CD14-positive monocyte (primary cell): ENCODE measurements at regions of chr6 and their contacts with region 1.

Region 1: DNA sequence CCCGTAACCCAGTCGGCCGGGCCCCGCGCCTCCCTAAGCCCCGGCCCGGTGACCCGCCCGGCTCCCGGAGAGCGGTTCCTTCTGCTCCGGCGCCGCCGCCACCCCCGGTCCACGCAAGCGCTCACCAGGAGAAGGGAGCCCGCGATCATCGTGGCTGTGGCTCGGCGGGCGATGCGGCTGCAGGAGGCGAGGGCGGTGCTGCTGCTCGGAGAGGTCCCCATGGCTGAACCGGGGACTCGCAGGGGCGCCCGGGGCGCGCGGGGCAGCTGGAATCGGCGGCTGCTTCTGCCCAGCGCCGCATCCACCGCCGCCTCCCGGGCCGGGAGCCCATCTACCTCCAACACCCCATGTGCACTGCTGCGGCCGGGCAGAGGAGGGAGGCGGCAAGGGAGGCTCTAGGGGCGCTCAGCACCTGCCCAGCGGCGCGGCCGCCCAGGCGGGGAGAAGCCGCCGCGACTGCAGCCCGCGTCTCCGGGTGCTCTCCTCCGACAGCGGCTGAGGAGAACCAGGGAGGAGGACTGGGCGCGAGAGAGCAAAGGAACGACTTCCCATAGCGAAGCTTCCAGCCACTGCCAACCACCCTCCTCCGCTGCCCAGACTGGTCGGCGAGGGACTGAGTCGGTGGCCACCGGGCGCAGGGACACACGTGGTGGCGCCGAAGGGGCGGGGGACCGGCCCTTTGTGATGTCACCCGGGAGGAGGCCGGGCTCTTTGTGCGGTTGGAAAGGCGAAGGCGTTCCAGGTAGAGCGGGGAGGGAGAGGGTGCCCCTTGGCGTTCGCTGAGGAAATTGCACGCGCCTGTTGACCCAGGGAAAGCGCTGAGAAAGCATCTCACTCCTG is at the start of gene TNFRSF21:
- DNase-seq: peak; percentile 84 to 93 (median 87)
- H3K4me3 ChIP-seq: peak within 1 kb of the TSS; percentile 41 to 79 (median 41)
- H3K4me3 Mint-ChIP-seq: peak within 1 kb of the TSS; percentile 79 to 88
- H3K27ac ChIP-seq: no peak within 1 kb of the TSS
- H3K27ac Mint-ChIP-seq: peak within 1 kb of the TSS in 2 of 7 donors; percentile 48 to 79
- H3K4me1 ChIP-seq: peaks cover 10 to 14% of the 10 kb centered on the region in 2 donors
- H3K4me1 Mint-ChIP-seq: peaks cover 11% of the 10 kb centered on the region
- H3K27me3 ChIP-seq: peaks cover 22 to 27% of the 10 kb centered on the region in 2 donors
- H3K27me3 Mint-ChIP-seq: peaks cover 24 to 38% (median 29%) of the 10 kb centered on the region in 3 donors
- CTCF ChIP-seq: peak; percentile 93
- polyA plus RNA-seq, gene TNFRSF21: 0.43 to 0.86 (median 0.58) TPM

Region 2: DNA sequence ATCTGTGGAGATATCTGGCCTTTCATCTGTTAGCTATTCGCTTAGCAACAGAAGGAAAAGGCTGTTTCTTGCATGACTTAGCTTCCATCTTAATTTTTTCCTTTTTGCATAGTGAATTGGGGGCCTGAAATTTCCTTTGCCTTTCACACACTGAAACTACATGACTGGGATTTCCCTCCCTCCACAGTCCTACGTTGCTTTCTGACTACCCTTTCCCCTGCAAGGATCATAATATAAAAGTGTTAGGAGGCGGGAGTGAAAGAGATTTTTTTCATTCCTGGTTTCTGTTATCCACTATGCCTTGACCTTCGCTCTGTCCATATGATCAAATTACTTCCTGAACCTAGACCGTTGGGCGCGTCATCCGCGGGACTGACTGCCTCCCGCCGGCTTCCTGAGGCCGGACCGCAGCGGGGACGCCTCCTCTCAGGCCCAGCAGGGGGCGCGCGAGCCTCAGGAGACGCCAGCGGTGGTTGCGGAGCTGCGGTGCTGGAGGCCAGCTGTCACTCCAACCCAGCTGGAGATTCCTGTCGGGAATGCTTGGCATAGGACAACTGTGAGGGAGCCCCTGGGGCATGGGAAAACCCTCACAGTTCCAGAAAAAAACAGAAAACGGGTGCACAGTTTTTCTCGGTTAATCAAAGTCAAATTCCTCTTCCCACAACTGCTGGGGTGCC is 460.7 kb before region 1 on chr6:
- intact Hi-C with region 1: loop called in 1 of 2 experiments (anchors 10 kb)
- DNase-seq: peak; percentile 56 to 79 (median 72)
- H3K4me3 ChIP-seq: peak overlapping the region in 1 of 3 experiments; percentile 52
- H3K4me3 Mint-ChIP-seq: peak overlapping the region; percentile 60 to 87
- H3K27ac ChIP-seq: no peak overlapping the region
- H3K27ac Mint-ChIP-seq: peak overlapping the region in 2 of 7 donors; percentile 17 to 71
- H3K4me1 ChIP-seq: peaks cover 5 to 7% of the 10 kb centered on the region in 2 donors
- H3K4me1 Mint-ChIP-seq: peaks cover 12% of the 10 kb centered on the region
- H3K27me3 ChIP-seq: no peaks in the 10 kb centered on the region
- H3K27me3 Mint-ChIP-seq: peaks cover 0 to 6% (median 1%) of the 10 kb centered on the region in 3 donors
- CTCF ChIP-seq: peak; percentile 95

Region 3: DNA sequence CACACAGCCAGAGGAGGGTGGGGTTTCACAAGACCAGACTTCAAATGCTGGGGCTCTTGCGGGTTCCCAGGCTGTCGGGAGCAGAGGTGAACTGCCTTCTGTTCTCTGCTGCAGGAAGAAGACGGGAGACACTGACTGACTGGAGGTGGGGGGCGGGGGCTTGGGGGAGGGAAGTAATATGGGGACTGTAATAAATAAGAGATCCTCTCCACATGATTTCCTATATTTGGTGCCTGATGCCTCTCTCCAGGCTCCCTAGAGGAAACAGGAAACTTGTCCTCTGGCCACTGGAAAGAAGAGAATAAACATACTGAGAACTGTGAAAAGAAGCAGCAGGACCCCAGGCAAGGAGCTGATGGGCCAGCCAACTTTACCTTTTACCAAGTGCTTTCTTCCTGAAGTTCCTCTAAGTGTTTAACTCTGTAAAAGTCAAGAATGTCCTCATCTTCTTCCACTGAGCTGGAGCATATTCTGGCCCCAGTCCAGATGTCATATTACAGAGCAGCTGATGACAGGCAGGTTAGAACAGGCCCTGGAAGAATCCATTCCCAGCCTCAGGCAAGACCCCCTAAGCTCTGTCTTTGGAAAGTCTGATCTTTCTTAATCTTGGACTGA is 354.6 kb before region 1 on chr6:
- intact Hi-C with region 1: no loop called
- DNase-seq: no peak
- H3K4me3 ChIP-seq: no peak overlapping the region
- H3K4me3 Mint-ChIP-seq: no peak overlapping the region
- H3K27ac ChIP-seq: no peak overlapping the region
- H3K27ac Mint-ChIP-seq: peak overlapping the region in 1 of 7 donors; percentile 27
- H3K4me1 ChIP-seq: no peaks in the 10 kb centered on the region
- H3K4me1 Mint-ChIP-seq: no peaks in the 10 kb centered on the region
- H3K27me3 ChIP-seq: no peaks in the 10 kb centered on the region
- H3K27me3 Mint-ChIP-seq: peaks cover 0 to 6% (median 3%) of the 10 kb centered on the region in 3 donors
- CTCF ChIP-seq: no peak

Region 4: DNA sequence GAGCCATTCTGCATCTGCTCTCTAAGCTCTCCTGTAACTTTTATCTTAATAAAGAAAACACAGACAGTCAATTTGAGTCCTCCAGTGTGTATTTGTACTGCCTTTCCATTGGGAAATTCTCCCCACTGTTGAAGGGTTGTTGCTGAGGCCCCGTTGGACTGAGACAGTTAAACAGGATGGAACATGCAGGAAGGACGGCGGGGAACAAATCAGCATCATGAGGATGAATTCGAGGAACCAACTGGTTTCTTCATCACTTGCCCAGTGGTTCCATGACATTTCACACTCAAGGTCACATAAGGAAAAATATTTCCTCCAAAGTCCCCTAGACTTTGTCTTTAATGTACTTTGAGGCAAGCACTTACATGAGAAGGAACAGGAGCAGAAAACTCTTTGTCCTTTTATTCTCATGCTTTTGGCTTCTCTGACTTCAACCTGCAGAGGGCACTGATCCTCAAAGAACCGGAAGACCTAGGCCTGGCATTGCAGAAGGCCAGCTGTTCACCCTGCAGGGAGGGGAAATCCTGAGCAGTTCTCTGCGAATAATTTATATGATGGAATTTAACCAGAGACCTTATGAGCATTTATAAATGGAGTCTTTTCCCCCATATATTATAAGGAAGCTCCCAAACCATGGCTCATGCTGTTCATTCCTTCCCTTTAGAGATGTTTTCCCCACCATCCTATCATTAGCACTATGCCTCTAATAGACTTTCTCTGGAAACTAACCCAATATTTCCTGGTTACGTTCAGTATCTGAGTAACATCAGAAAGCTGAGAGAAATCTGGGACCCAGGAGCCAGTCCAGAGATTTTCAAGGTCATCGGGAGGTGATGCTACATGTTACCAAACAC is 212.2 kb before region 1 on chr6:
- intact Hi-C with region 1: loop called (anchors 1 to 2 kb)
- DNase-seq: peak; percentile 53 to 72 (median 58)
- H3K4me3 ChIP-seq: no peak overlapping the region
- H3K4me3 Mint-ChIP-seq: no peak overlapping the region
- H3K27ac ChIP-seq: no peak overlapping the region
- H3K27ac Mint-ChIP-seq: no peak overlapping the region
- H3K4me1 ChIP-seq: no peaks in the 10 kb centered on the region
- H3K4me1 Mint-ChIP-seq: no peaks in the 10 kb centered on the region
- H3K27me3 ChIP-seq: peaks cover under 1 to 4% of the 10 kb centered on the region in 2 donors
- H3K27me3 Mint-ChIP-seq: peaks cover 12 to 17% (median 14%) of the 10 kb centered on the region in 3 donors
- CTCF ChIP-seq: peak; percentile 74

Region 5: DNA sequence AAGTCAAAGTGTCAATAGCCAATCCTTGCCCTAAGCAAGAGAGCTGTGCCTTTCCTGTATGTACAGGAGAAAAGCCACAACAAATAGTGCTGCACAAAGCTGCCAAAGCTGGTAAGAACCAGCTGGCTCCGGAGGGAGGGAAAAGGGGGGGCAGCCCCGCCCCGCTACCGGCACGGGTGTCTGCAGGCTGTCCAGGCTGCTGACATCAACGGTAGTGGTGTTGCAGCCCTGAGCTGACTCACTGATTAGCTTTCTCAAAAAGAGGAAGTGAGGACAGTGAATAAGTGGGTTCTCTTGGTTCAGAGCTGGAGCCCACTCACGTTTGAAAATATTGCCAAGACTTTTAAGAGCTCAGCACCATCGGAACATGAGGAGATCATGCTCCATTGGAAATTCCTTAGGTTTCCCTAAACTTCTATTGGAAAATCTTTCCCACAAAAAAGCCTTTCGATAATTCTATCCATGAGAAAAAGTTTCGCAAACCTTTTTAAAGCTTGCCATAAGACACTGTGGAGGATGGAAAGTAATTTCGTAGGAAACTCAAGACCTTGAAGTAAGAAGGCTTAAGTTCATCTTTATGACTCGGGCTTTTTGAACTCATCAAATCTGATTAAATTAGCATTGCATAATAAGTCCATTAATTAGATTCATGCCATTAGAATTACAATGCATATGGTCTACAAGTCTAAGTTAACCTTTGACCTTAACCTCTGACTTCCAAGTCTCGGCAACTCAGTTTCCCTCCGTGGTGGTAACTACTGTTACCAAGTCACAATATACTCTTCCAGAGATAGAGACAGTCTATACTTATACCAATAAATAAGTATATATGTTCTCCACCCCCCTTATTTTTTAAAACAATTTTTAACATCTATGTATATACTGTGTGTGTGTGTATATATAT is 66.8 kb before region 1 on chr6:
- intact Hi-C with region 1: loop called in 1 of 2 experiments (anchors 5 kb)
- DNase-seq: peak; percentile 95 to 98 (median 98)
- H3K4me3 ChIP-seq: peak overlapping the region in 1 of 3 experiments; percentile 53
- H3K4me3 Mint-ChIP-seq: peak overlapping the region in 1 of 2 donors; percentile 67
- H3K27ac ChIP-seq: peak overlapping the region; percentile 44 to 87
- H3K27ac Mint-ChIP-seq: peak overlapping the region; percentile 82 to 95 (median 92)
- H3K4me1 ChIP-seq: peaks cover 42 to 52% of the 10 kb centered on the region in 2 donors
- H3K4me1 Mint-ChIP-seq: peaks cover 54% of the 10 kb centered on the region
- H3K27me3 ChIP-seq: no peaks in the 10 kb centered on the region
- H3K27me3 Mint-ChIP-seq: no peaks in the 10 kb centered on the region
- CTCF ChIP-seq: no peak

Region 6: DNA sequence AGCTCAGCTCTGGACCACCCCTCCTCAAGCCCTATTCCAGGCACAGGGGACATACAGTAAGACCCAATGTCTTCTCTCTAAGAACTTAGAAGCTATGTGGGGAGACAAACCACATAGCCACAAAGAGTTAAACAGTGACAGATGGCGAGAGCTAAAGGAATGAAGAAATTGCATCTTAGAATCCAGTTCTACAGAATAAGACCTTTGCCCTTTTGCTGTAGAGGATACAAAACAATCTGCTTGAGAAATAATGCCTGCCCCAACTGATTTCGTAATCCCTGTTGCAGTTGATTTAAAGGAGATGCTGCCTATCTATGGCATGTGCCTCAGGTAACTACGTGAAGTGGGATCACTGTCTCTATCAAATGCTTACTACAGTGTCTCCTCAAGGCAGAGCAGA is 31.0 kb before region 1 on chr6:
- intact Hi-C with region 1: no loop called
- DNase-seq: peak in 1 of 3 donors; percentile 2
- H3K4me3 ChIP-seq: no peak overlapping the region
- H3K4me3 Mint-ChIP-seq: no peak overlapping the region
- H3K27ac ChIP-seq: no peak overlapping the region
- H3K27ac Mint-ChIP-seq: peak overlapping the region in 1 of 7 donors; percentile 40
- H3K4me1 ChIP-seq: peaks cover 4 to 7% of the 10 kb centered on the region in 2 donors
- H3K4me1 Mint-ChIP-seq: peaks cover 8% of the 10 kb centered on the region
- H3K27me3 ChIP-seq: no peaks in the 10 kb centered on the region
- H3K27me3 Mint-ChIP-seq: peaks cover 0 to 2% (median 0%) of the 10 kb centered on the region in 3 donors
- CTCF ChIP-seq: no peak